Activated T-helper 1 cell treated with anti-CD3 and anti-CD28 coated beads, Interleukin-12 subunit alpha, Interleukin-12 subunit beta, Interleukin-2, Interleukin-4 antibody, amounts not matched to agents 30 ng/mL and 10 ng/mL and 1 ng/mL, durations not matched to agents 14 hours and 24 hours and 36 hours (primary cell): ENCODE measurements at regions of chrX and their contacts with region 1.

Region 1: GRCh38 chrX:106415276-106415895 is 196.4 kb upstream of the RADX start:
- DNase-seq: no peak
- H3K4me3 Mint-ChIP-seq: no peak overlapping the region
- H3K27ac Mint-ChIP-seq: no peak overlapping the region
- H3K4me1 Mint-ChIP-seq: no peaks in the 10 kb centered on the region
- H3K27me3 Mint-ChIP-seq: peaks cover 6% of the 10 kb centered on the region

Region 2: GRCh38 chrX:106247162-106247561 is 168.2 kb before region 1 on chrX:
- intact Hi-C with region 1: no loop called
- DNase-seq: no peak
- H3K4me3 Mint-ChIP-seq: no peak overlapping the region
- H3K27ac Mint-ChIP-seq: no peak overlapping the region
- H3K4me1 Mint-ChIP-seq: no peaks in the 10 kb centered on the region
- H3K27me3 Mint-ChIP-seq: no peaks in the 10 kb centered on the region

Region 3: DNA sequence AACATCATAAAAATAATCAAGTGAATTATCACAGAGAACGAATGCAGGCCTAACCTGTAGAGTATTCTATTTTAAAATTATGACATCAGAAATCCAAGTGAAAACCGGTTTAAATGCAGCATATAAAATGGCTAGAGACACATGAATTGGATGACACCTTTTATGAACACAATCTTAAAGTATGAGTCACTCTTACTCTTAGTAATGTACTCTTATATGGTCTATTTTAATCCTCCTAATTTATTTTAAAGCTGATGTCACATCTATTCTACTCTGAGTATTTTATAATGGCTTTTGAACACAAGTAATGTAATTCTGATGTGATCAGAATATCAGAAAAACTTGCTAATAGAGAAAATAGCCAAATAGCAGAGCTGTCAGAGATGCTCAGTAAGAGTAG is 35.0 kb after region 1 on chrX:
- intact Hi-C with region 1: no loop called
- DNase-seq: no peak
- H3K4me3 Mint-ChIP-seq: no peak overlapping the region
- H3K27ac Mint-ChIP-seq: no peak overlapping the region
- H3K4me1 Mint-ChIP-seq: no peaks in the 10 kb centered on the region
- H3K27me3 Mint-ChIP-seq: no peaks in the 10 kb centered on the region

Region 4: DNA sequence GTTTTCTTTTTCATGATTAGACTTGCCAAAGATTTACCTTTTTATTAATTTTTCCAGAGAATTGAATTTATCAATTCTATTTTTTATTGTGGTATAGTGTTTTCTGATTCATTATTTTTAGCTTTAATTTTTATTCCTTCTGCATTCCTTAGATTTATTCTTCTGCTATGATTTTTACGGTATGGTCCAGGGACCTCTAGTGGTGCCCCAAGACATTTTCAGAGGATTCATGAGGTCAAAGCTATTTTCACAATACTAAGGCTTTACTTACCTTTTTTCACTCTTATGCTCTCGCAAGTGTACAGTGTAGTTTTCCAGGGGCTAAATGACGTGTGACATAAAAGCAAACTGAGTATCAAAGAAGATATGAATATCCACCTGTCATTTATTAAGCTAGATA is 204.4 kb after region 1 on chrX:
- intact Hi-C with region 1: loop called (anchors 5 kb)
- DNase-seq: no peak
- H3K4me3 Mint-ChIP-seq: no peak overlapping the region
- H3K27ac Mint-ChIP-seq: no peak overlapping the region
- H3K4me1 Mint-ChIP-seq: no peaks in the 10 kb centered on the region
- H3K27me3 Mint-ChIP-seq: peaks cover 2% of the 10 kb centered on the region

Region 5: GRCh38 chrX:107924136-107924746 is 1508.9 kb after region 1 on chrX:
- intact Hi-C with region 1: loop called (anchors 10 kb)
- DNase-seq: no peak
- H3K4me3 Mint-ChIP-seq: no peak overlapping the region
- H3K27ac Mint-ChIP-seq: no peak overlapping the region
- H3K4me1 Mint-ChIP-seq: no peaks in the 10 kb centered on the region
- H3K27me3 Mint-ChIP-seq: no peaks in the 10 kb centered on the region